KBM-7 (cell line): ENCODE measurements at regions of chr2 and their contacts with region 1.

Region 1: GRCh38 chr2:36355151-36355889 is at the start of gene CRIM1:
- DNase-seq: peak; percentile 63

Region 2: GRCh38 chr2:36663851-36664695 is 308.8 kb after region 1 on chr2:
- in situ Hi-C with region 1: loop called (anchors 25 kb)
- DNase-seq: peak; percentile 68

Region 3: DNA sequence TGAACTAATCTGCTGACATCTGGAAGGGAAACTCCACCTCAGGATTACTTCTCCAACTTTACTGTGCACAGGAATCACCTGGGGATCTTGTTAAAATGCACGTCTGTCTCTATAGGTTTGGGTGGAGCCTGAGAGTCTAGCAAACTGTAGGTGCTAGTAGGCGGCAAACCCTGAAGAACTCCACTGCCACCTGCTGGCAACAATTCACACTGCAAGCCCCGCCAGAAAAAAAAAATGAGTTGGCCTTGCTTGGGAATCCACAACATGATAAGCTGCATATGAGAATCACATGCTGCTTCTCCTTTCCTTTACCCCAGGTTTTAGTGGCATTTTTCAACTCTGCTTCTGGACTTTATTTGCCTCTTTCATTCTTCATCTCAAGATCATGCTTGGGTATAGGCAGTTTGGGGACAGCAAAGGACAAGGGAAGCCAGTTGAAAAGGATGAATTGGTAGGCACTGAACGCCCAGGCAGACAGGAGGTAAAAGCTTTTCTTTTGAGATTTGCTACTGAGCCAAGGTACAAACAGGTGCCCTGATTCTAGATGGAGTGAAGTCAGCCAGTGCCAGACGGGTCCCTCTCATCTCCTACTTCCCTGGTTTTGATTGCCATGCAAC is 430.0 kb after region 1 on chr2:
- in situ Hi-C with region 1: loop called (anchors 25 kb)
- DNase-seq: peak; percentile 96